ENCODE measurements at regions of chr13 and their contacts with region 1.

Region 1: DNA sequence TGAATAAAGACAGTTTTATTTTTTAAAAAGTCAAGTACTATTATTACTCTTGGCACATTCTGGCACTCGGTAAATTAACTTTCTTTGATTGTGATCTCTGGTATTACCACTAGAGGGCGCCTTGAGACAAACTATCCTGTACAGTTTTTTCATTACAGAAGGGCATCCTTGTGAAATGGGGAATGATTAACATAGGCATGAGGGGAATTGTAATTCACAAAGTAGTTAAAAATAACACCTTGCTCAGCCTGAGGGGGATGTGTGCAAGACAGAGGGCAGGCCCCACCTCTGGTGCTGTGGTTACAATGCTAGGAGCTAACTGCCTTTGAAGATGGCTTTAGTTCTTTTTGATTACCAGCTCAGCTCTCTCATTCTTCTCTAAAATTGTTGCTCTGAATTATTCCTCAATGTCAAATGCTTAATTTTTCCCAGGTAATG is 24.2 kb upstream of the C1QTNF9B start:
- DNase-seq: peak; percentile 33
- ATAC-seq: peak; percentile 49
- H3K4me3 Mint-ChIP-seq: no peak overlapping the region
- H3K27ac Mint-ChIP-seq: no peak overlapping the region
- H3K4me1 Mint-ChIP-seq: no peaks in the 10 kb centered on the region
- H3K27me3 Mint-ChIP-seq: peaks cover 37% of the 10 kb centered on the region

Region 2: DNA sequence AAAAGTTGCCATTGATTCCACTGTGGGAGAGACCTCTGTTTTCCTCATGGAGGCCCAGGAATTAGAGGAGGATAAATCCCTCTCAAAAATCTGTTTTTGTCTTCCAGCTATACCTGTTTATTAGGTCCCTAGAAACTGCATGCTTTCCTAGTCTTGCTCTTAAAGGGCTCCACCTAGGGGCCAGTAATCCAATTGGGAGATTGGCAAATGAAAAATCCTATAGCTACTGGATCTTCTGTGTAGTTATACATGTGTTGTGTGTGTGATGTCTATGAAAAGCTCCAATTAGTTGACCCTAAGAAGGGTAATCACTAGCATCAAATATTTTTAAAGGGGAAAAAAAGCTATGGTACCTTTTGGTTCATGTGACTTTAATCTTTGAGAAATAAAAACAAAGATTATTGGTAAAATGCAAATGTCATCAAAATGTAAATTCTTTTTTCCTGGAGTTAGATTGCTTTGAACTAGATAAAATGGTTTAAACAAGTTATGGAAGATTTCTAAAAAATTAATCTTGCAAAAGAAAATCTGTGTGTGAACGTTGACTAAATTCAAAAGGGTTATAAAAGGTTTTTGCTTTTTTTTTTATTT is 39.2 kb after region 1 on chr13:
- CTCF ChIA-PET with region 1: interaction called, 57 read pairs
- POLR2A ChIA-PET with region 1: no interaction called
- DNase-seq: no peak
- ATAC-seq: no peak
- H3K4me3 Mint-ChIP-seq: no peak overlapping the region
- H3K27ac Mint-ChIP-seq: no peak overlapping the region
- H3K4me1 Mint-ChIP-seq: peaks cover 14% of the 10 kb centered on the region
- H3K27me3 Mint-ChIP-seq: peaks cover 2% of the 10 kb centered on the region

Region 3: DNA sequence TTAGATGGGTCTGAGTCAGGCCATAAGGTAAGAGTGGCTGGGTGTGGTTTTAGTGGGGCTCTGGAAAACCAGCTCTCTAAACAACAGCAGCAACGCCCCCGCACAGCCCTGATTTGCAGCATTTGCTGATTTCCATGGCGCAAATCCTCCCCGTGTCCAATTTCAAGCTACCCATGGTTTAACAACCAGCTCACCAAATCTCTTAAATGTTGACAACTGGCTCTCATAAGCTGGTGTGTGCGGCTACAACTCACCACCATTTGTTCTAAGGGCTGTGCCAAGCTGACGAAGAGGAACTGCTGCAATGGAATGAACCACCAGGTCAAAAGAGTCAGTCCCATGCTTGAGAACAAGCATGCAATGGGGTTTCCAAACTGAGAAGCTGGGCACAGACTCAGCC is 568.3 kb after region 1 on chr13:
- CTCF ChIA-PET with region 1: no interaction called
- POLR2A ChIA-PET with region 1: no interaction called
- DNase-seq: no peak
- ATAC-seq: no peak
- H3K4me3 Mint-ChIP-seq: no peak overlapping the region
- H3K27ac Mint-ChIP-seq: no peak overlapping the region
- H3K4me1 Mint-ChIP-seq: no peaks in the 10 kb centered on the region
- H3K27me3 Mint-ChIP-seq: no peaks in the 10 kb centered on the region